Naive thymus-derived CD4-positive, alpha-beta T cell (primary cell): ENCODE measurements at regions of chr1 and their contacts with region 1.

Region 1: DNA sequence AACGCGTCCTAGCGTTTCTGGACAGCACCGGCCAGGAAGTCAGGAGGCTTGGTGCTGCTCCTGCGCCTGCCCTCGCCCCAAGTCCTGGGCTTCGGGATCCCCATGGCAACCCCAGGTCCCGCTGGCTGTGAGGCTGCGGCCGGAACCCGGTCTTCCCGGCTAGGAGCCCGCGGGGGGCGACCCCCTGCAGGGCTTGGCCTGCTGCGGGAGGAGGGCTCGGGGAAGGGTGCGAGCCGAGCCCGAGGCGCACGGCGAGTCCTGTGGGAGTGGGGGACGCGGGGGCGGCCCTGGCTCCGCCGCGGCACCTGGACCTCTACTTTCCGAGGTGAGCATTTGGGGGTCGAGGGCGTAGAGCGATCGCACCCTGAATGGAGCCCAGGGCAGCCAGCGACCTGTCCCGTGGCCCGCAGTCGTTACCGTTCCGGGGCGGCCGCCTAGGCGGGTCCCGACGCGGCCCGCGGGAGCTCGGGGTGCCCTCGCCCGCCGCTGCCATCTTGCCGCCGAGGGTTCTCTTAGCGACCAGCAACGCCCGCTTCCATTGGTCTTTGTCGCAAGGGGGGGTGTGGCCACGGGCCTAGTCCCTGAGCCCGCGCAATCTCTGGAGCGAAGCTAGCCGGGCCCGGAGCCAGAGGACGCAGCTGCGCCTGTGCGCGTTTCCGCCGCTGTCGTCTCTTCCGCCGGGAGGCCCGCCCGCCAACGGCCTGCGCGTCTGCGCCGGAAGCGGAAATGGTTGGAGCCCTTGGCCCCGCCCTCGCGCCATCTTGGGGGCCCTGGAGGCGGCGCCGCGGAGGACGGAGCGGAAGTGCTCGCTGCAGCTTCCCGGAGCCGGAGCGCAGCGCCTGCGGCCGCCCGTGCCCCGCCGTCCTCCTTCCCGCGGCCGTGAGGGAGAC is at the starts of genes MORN1 and RER1:
- DNase-seq: peak; percentile 96 to 100 (median 99)
- ATAC-seq: peak; percentile 98
- H3K4me3 ChIP-seq: peak within 1 kb of the TSS; percentile 77
- H3K4me3 Mint-ChIP-seq: peak within 1 kb of the TSS; percentile 80 to 93 (median 90)
- H3K27ac ChIP-seq: peak within 1 kb of the TSS; percentile 82
- H3K27ac Mint-ChIP-seq: peak within 1 kb of the TSS; percentile 63 to 96 (median 88)
- H3K4me1 ChIP-seq: peaks cover 23 to 33% of the 10 kb centered on the region in 2 donors
- H3K4me1 Mint-ChIP-seq: peaks cover 23 to 41% (median 31%) of the 10 kb centered on the region in 7 donors
- H3K27me3 ChIP-seq: no peaks in the 10 kb centered on the region
- H3K27me3 Mint-ChIP-seq: no peaks in the 10 kb centered on the region
- total RNA-seq, gene MORN1: 8.5 to 16.4 (median 11.2) TPM
- total RNA-seq, gene RER1: 71.0 to 150 (median 136) TPM

Region 2: GRCh38 chr1:2189459-2190425 is 201.5 kb before region 1 on chr1:
- CTCF ChIA-PET with region 1: interaction called, 8 read pairs
- POLR2A ChIA-PET with region 1: interaction called, 14 read pairs
- intact Hi-C with region 1: loop called (anchors 2 kb)
- DNase-seq: peak; percentile 78 to 95 (median 91)
- ATAC-seq: peak; percentile 95
- H3K4me3 ChIP-seq: peak overlapping the region; percentile 80
- H3K4me3 Mint-ChIP-seq: peak overlapping the region; percentile 66 to 86 (median 80)
- H3K27ac ChIP-seq: peak overlapping the region; percentile 82
- H3K27ac Mint-ChIP-seq: peak overlapping the region; percentile 68 to 99 (median 95)
- H3K4me1 ChIP-seq: peaks cover 6 to 9% of the 10 kb centered on the region in 2 donors
- H3K4me1 Mint-ChIP-seq: peaks cover 0 to 23% (median 11%) of the 10 kb centered on the region in 7 donors
- H3K27me3 ChIP-seq: no peaks in the 10 kb centered on the region
- H3K27me3 Mint-ChIP-seq: no peaks in the 10 kb centered on the region

Region 3: DNA sequence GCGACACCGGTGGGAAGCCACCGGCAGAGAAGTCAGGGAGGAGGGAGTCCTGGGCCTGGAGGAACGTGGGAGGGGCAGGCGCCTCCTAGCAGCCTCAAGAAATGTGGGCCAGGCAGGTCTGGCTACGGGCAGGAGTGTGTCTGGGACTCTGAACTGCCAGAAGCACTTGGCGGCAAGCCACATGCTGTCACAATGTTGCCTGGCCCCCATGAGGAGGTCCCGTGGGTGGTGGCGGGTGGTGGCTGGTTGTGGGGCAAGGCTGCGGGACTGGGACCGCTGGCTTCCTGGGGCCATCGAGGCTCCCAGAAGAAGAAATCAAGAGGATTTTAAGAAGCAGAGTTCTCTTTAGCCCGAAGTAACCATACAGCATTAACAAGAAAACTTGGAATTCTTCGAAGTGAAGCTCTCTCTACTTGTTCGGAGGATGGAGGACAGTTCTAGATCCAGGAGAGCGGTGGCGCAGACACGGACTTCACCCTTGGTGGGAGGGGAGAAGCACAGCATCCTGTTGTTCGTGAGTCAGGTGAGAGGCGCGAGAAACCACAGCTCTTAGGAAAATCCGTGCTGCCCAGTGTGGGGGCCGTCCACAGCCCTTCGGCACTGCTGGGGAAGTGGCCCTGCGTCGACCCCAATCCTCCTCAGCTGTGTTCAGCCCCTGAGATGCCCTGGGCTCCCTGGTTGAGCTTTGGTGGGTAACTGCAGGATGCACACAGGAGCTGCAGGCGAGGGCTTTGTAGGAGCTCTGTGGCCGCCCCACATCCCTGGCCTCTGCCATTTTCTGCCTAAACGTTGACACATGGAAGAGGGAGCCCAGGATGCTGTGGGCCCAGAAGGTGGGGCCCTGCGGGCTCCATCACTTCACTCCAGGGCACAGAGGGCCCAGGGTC is 150.8 kb before region 1 on chr1:
- CTCF ChIA-PET with region 1: no interaction called
- POLR2A ChIA-PET with region 1: no interaction called
- intact Hi-C with region 1: no loop called
- DNase-seq: peak in 3 of 9 donors; percentile 36 to 68 (median 37)
- ATAC-seq: peak; percentile 30
- H3K4me3 ChIP-seq: peak overlapping the region; percentile 26
- H3K4me3 Mint-ChIP-seq: peak overlapping the region; percentile 40 to 98 (median 84)
- H3K27ac ChIP-seq: peak overlapping the region; percentile 59
- H3K27ac Mint-ChIP-seq: peak overlapping the region; percentile 59 to 97 (median 93)
- H3K4me1 ChIP-seq: peaks cover 47 to 84% of the 10 kb centered on the region in 2 donors
- H3K4me1 Mint-ChIP-seq: peaks cover 66 to 92% (median 83%) of the 10 kb centered on the region in 7 donors
- H3K27me3 ChIP-seq: no peaks in the 10 kb centered on the region
- H3K27me3 Mint-ChIP-seq: no peaks in the 10 kb centered on the region

Region 4: DNA sequence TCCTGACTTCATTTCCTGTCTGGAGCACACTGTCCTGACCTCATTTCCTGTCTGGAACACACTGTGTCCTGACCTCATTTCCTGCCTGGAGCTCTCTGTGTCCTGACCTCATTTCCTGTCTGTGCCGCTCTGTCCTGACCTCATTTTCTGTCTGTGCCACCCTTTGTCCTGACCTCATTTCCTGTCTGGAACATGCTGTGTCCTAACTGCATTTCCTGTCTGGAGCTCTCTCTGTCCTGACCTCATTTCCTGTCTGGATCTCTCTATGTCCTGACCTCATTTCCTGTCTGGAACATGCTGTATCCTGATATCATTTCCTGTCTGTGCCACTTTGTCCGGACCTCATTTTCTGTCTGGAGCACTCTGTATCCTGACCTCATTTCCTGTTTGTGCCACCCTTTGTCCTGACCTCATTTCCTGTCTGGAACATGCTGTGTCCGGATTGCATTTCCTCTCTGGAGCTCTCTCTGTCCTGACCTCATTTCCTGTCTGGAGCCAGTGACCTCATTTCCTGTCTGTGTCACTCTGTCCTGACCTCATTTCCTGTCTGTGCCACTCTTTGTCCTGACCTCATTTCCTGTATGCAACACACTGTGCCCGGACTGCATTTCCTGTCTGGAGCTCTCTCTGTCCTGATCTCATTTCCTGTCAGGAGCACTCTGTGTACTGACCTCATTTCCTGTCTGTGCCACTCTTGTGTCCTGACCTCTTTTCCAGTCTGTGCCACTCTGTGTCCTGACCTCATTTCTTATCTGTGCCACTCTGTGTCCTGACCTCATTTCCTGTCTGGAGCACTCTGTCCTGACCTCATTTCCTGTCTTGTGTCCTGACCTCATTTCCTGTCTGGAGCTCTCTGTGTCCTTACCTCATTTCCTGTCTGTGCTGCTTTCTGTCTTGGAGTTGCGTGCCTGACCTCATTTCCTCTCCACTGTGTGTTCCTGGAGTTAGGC is 135.6 kb before region 1 on chr1:
- CTCF ChIA-PET with region 1: no interaction called
- POLR2A ChIA-PET with region 1: interaction called, 10 read pairs
- intact Hi-C with region 1: loop called in 1 of 2 experiments (anchors 1 kb)
- DNase-seq: peak; percentile 59 to 99 (median 95)
- ATAC-seq: peak; percentile 79
- H3K4me3 ChIP-seq: peak overlapping the region; percentile 0
- H3K4me3 Mint-ChIP-seq: no peak overlapping the region
- H3K27ac ChIP-seq: peak overlapping the region; percentile 98
- H3K27ac Mint-ChIP-seq: no peak overlapping the region
- H3K4me1 ChIP-seq: peaks cover 52 to 70% of the 10 kb centered on the region in 2 donors
- H3K4me1 Mint-ChIP-seq: peaks cover 27 to 62% (median 51%) of the 10 kb centered on the region in 7 donors
- H3K27me3 ChIP-seq: no peaks in the 10 kb centered on the region
- H3K27me3 Mint-ChIP-seq: no peaks in the 10 kb centered on the region

Region 5: DNA sequence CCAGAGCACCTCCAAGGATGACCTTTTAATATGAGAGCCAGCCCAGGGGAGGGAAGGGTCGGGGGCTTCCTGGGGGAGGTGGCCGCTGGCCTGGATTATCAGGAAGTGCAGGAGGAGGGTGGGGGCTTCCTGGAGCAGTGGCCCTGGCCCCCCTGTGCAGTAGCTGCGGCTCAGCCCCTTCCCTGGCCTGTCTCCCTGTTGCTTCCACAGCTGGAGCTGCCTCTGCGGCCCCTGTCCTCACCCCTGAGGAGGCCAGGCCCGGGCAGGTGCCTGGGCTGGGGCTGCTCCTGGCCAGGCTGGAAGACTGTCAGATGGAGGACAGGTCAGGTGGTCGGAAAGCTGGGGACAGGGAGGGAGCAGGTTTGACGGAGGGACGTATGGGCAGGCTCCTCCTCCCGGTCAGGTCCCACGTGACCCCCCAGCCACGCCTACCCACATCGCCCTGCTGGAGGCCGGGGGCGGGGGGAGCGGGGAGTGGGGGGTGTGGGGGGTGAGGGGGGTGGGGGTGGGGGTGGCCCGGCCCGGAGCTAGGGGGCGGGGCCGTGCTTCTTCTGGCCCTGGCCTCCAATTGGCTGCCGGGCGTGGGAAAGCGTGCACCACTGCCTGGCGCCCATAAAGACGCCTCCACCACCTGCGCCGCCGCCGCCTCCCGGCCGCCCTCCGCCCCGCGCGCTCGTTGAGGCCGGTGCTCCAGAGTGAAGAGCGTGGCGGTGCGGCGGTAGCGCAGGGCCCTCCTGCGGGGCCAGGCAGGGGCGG is 154.7 kb after region 1 on chr1:
- CTCF ChIA-PET with region 1: no interaction called
- POLR2A ChIA-PET with region 1: interaction called, 13 read pairs
- intact Hi-C with region 1: loop called (anchors 1 kb)
- DNase-seq: peak; percentile 83 to 91 (median 86)
- ATAC-seq: peak; percentile 74
- H3K4me3 ChIP-seq: peak overlapping the region; percentile 88
- H3K4me3 Mint-ChIP-seq: peak overlapping the region; percentile 27 to 97 (median 94)
- H3K27ac ChIP-seq: peak overlapping the region; percentile 97
- H3K27ac Mint-ChIP-seq: peak overlapping the region in 8 of 9 donors; percentile 28 to 98 (median 97)
- H3K4me1 ChIP-seq: peaks cover 18 to 40% of the 10 kb centered on the region in 2 donors
- H3K4me1 Mint-ChIP-seq: peaks cover 0 to 41% (median 18%) of the 10 kb centered on the region in 7 donors
- H3K27me3 ChIP-seq: no peaks in the 10 kb centered on the region
- H3K27me3 Mint-ChIP-seq: peaks cover 0 to 16% (median 0%) of the 10 kb centered on the region in 5 donors

Region 6: DNA sequence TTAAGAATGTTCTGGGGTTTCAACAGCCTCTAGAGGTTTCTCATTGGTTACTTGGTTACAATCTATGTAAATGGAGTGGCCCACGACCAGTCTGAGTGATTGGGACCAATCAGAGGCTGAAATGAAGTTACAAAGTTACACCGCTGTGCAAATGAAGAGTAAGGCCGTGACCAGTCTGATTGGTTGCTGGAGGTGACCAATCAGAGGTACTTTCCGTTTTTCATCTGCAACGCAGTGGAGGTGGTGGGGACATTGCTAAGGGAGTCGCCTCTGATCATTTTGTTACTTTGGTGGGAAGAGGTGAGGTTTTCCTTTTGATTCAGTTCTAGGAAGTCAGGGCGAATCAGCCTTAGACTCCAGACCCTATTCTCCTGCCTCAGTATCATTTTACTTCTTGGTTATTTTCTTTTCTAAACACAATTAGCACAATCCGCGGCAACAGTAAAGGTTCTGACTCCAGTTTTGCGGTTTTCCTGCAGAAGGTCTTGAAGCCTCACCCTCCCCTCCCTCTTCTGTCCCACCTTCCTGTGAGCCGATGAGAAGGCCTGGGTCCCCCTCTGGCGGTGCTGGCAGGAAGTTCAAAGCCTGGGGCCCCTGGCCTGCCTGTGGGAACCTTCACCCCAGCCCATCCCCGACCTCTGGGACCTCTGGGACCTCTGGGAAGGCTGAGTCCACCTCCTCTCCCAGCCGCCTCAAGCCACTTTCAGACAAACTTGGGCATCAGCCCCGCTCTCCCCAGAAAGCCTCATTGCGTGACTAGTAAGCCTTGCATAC is 448.9 kb after region 1 on chr1:
- CTCF ChIA-PET with region 1: interaction called, 3 read pairs
- POLR2A ChIA-PET with region 1: no interaction called
- intact Hi-C with region 1: loop called in 1 of 2 experiments (anchors 1 kb)
- DNase-seq: peak in 8 of 9 donors; percentile 43 to 87 (median 82)
- ATAC-seq: peak; percentile 89
- H3K4me3 ChIP-seq: peak overlapping the region; percentile 31
- H3K4me3 Mint-ChIP-seq: peak overlapping the region; percentile 49 to 88 (median 78)
- H3K27ac ChIP-seq: peak overlapping the region; percentile 60
- H3K27ac Mint-ChIP-seq: peak overlapping the region; percentile 40 to 92 (median 90)
- H3K4me1 ChIP-seq: peaks cover 10 to 17% of the 10 kb centered on the region in 2 donors
- H3K4me1 Mint-ChIP-seq: peaks cover 11 to 24% (median 23%) of the 10 kb centered on the region in 7 donors
- H3K27me3 ChIP-seq: no peaks in the 10 kb centered on the region
- H3K27me3 Mint-ChIP-seq: peaks cover 0 to 4% (median 0%) of the 10 kb centered on the region in 5 donors